Activated CD4-positive, alpha-beta T cell treated with anti-CD3 and anti-CD28 coated beads for 36 hours (primary cell): ENCODE measurements at regions of chr18 and their contacts with region 1.

Region 1: DNA sequence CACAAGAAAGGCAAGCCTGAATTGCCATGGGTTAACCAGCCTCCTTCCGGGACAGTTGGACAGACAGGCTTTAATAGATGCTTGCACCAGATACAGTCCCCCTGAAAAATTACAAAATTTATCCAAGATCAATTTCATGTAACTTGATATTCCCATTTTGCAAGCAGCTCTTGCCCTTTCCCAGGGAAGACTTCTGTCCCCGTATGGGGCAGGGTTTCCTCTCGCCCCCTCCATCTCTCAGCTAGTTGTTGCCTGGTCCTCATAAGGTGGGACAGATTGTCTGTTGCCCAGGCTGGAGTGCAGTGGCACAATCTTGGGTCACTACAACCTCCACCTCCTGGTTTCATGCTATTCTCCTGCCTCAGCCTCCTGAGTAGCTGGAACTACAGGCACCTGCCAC is 61.2 kb downstream of the TTC39C start:
- DNase-seq: no peak
- ATAC-seq: no peak
- H3K4me3 Mint-ChIP-seq: no peak overlapping the region
- H3K27ac Mint-ChIP-seq: peak overlapping the region; percentile 81
- H3K4me1 Mint-ChIP-seq: peaks cover 44% of the 10 kb centered on the region
- H3K27me3 Mint-ChIP-seq: no peaks in the 10 kb centered on the region

Region 2: GRCh38 chr18:23964282-23965238 is 111.2 kb before region 1 on chr18:
- CTCF ChIA-PET with region 1: interaction called, 4 read pairs
- POLR2A ChIA-PET with region 1: interaction called, 3 read pairs
- intact Hi-C with region 1: loop called in 1 of 2 experiments (anchors 2 kb)
- DNase-seq: peak; percentile 64
- ATAC-seq: peak; percentile 82
- H3K4me3 Mint-ChIP-seq: no peak overlapping the region
- H3K27ac Mint-ChIP-seq: peak overlapping the region; percentile 58
- H3K4me1 Mint-ChIP-seq: peaks cover 45% of the 10 kb centered on the region
- H3K27me3 Mint-ChIP-seq: no peaks in the 10 kb centered on the region

Region 3: GRCh38 chr18:24014062-24014985 is 61.4 kb before region 1 on chr18 and contains the start of gene TTC39C:
- CTCF ChIA-PET with region 1: interaction called, 4 read pairs
- POLR2A ChIA-PET with region 1: no interaction called
- intact Hi-C with region 1: loop called (anchors 1 to 2 kb)
- DNase-seq: peak; percentile 93
- ATAC-seq: peak; percentile 68
- H3K4me3 Mint-ChIP-seq: peak within 1 kb of the TSS; percentile 94
- H3K27ac Mint-ChIP-seq: peak within 1 kb of the TSS; percentile 84
- H3K4me1 Mint-ChIP-seq: peaks cover 70% of the 10 kb centered on the region
- H3K27me3 Mint-ChIP-seq: peaks cover 2% of the 10 kb centered on the region
- total RNA-seq, gene TTC39C: 22.2 to 28.6 TPM

Region 4: DNA sequence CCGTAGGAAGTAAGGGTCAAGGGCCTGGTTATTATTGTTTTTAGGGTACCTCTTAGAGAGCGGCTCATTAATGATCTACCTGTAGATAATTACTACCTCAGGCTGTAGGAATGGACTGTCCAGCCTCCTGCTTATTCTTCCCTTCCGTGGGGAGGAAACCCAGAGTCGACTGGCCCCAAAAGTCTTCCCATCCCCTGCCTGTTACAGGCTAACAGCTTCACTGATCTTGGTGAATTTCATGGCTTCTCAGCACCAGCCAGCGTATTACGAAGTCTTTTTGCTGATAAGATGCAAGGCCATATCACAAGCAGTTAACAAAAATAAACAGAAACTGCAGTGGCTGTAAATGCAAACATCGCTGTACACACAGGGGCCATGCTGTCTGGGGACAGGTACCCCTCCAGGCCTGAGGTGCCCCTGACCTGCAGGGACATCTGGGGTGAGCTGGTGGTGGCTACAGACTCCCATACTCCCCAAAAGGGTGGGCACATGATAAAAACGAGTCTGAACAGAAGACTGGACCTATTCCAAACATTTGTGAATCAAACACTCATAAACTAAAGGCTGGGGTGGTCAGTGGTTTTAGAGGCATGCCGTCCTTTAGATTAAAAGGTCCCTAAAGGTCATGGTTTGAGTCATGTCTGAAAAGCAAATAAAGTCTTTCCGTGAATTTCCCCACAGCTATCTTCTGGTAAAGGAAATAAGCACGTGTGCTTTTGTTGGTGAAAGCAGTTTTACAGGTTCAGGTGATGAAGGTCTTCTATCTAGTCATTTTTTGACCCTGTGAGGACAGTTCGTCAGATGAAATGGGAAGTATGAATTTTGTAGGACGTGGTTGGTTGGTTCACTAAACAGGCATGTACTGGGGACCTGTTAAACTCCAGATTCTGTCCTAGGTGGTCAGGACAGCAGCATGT is 24.4 kb before region 1 on chr18:
- CTCF ChIA-PET with region 1: interaction called, 6 read pairs
- POLR2A ChIA-PET with region 1: no interaction called
- intact Hi-C with region 1: loop called (anchors 1 to 2 kb)
- DNase-seq: no peak
- ATAC-seq: peak; percentile 24
- H3K4me3 Mint-ChIP-seq: no peak overlapping the region
- H3K27ac Mint-ChIP-seq: peak overlapping the region; percentile 79
- H3K4me1 Mint-ChIP-seq: peaks cover 73% of the 10 kb centered on the region
- H3K27me3 Mint-ChIP-seq: no peaks in the 10 kb centered on the region

Region 5: DNA sequence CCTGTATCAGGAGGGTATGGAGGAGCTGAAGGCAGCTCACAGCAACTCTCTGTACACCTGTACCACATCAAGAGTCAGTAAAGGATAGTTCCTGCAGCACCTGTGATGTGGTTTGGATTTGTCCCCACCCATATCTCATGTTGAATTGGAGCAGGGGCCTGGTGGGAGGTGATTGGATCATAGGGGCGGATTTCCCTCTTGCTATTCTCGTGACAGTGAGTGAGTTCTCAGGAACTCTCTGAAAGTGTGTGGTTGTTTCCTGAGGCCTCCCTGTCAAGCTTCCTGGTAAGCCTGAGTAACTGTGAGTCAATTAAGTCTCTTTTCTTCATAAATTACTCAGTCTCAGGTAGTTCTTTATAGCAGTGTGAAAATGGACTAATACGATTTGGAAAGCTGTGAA is 293.0 kb after region 1 on chr18:
- CTCF ChIA-PET with region 1: no interaction called
- POLR2A ChIA-PET with region 1: no interaction called
- intact Hi-C with region 1: loop called in 1 of 2 experiments (anchors 2 kb)
- DNase-seq: peak; percentile 77
- ATAC-seq: peak; percentile 88
- H3K4me3 Mint-ChIP-seq: peak overlapping the region; percentile 22
- H3K27ac Mint-ChIP-seq: peak overlapping the region; percentile 77
- H3K4me1 Mint-ChIP-seq: peaks cover 28% of the 10 kb centered on the region
- H3K27me3 Mint-ChIP-seq: peaks cover 3% of the 10 kb centered on the region